GM18951 (cell line): ENCODE measurements at regions of chr15 and their contacts with region 1.

Region 1: DNA sequence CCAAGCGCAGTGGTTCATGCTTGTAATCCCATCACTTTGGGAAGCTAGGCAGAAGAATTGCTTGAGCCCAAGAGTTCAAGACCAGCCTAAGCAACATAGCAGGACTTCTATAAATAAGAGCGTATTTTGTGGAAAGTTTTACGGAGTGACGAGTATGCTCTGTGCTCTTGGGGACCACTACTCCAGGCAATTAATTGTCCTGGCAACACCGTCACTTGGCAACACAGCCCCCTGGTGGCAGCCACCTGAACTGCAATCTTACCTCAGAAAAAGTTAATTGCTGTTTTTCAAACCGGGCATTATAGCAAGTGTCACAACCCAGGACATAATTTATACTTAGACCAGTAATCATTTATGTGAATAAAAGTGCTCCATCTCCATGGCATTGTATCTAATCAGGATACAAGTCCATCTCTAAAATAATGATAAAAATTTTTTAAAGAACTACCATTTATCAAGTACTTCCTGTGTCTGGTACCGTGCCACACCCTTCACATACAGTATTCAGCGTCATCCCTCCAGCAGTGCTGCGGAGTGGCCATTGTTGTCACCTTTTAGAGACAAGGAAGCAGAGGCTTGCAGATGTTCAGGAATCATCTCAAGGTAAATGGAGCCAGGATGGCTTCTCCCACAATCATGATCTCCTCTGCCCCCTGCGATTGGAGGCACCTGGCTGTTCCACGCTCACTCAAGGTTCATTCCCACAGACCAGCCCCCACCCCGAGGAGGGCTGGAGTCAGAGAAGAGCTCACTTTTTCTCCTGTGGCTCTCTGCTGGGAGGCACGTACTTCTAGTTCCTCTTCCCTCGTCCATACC is 34.5 kb downstream of the PLA2G4D start:
- POLR2A ChIP-seq: no peak

Region 2: GRCh38 chr15:41989259-41989933 is 70.5 kb before region 1 on chr15:
- in situ Hi-C with region 1: loop called (anchors 5 kb)
- POLR2A ChIP-seq: no peak

Region 3: GRCh38 chr15:42010434-42010833 is 49.4 kb before region 1 on chr15:
- in situ Hi-C with region 1: no loop called
- POLR2A ChIP-seq: no peak